Endothelial cell of umbilical vein (primary cell): ENCODE measurements at regions of chr17 and their contacts with region 1.

Region 1: GRCh38 chr17:70525961-70526360 is 356.6 kb downstream of the KCNJ2 start:
- DNase-seq: no peak
- H3K4me3 ChIP-seq: no peak overlapping the region
- H3K27ac ChIP-seq: no peak overlapping the region
- H3K4me1 ChIP-seq: no peaks in the 10 kb centered on the region
- H3K27me3 ChIP-seq: no peaks in the 10 kb centered on the region
- CTCF ChIP-seq: no peak
- POLR2A ChIP-seq: no peak

Region 2: GRCh38 chr17:70510288-70510687 is 15.7 kb before region 1 on chr17:
- CTCF ChIA-PET with region 1: interaction called, 3 read pairs
- POLR2A ChIA-PET with region 1: no interaction called
- dilution Hi-C with region 1: no loop called
- intact Hi-C with region 1: loop called (anchors 2 kb)
- DNase-seq: no peak
- H3K4me3 ChIP-seq: no peak overlapping the region
- H3K27ac ChIP-seq: no peak overlapping the region
- H3K4me1 ChIP-seq: no peaks in the 10 kb centered on the region
- H3K27me3 ChIP-seq: no peaks in the 10 kb centered on the region
- CTCF ChIP-seq: no peak
- POLR2A ChIP-seq: no peak

Region 3: GRCh38 chr17:70644096-70644495 is 118.1 kb after region 1 on chr17:
- CTCF ChIA-PET with region 1: no interaction called
- POLR2A ChIA-PET with region 1: no interaction called
- dilution Hi-C with region 1: no loop called
- intact Hi-C with region 1: no loop called
- DNase-seq: peak; percentile 4
- H3K4me3 ChIP-seq: no peak overlapping the region
- H3K27ac ChIP-seq: no peak overlapping the region
- H3K4me1 ChIP-seq: no peaks in the 10 kb centered on the region
- H3K27me3 ChIP-seq: no peaks in the 10 kb centered on the region
- CTCF ChIP-seq: no peak
- POLR2A ChIP-seq: no peak